BJ (cell line): ENCODE measurements at regions of chr10 and their contacts with region 1.

Region 1: GRCh38 chr10:101441541-101442455 is 87.8 kb downstream of the BTRC start:
- DNase-seq: peak; percentile 8
- H3K4me3 ChIP-seq: no peak overlapping the region
- H3K27me3 ChIP-seq: no peaks in the 10 kb centered on the region
- CTCF ChIP-seq: peak; percentile 66

Region 2: DNA sequence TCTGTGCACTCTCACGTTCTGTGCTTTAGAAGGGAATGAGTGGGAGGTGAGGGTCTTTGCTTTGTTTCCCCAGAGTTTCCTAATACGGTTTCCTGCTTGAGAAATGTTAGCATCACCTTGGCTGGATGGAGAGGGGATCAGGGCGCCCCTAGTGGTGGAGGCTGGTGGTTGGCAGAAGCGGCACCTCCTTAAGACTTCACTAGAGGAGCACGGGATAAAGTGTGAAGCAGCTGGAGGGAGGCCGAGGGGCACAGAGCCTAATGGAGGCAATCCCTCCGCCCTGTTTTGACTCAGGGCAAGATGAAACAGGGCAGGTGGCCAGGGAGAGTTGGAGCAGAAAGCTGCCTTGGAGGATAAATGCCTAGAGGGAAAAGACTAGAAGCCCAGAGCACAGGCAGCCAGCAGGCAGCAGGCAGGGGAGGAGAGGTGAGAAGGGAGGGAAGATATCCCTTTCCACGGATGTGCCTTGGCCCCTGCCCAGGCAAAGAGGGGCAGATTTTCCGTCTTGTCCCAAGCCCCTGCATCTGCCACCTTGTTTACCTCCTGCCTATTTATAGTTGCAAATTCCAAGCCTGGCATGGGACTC is 143.8 kb before region 1 on chr10:
- CTCF ChIA-PET with region 1: interaction called, 14 read pairs
- POLR2A ChIA-PET with region 1: no interaction called
- DNase-seq: no peak
- H3K4me3 ChIP-seq: no peak overlapping the region
- H3K27me3 ChIP-seq: peaks cover 28% of the 10 kb centered on the region
- CTCF ChIP-seq: peak; percentile 93

Region 3: GRCh38 chr10:101341438-101341837 is 100.4 kb before region 1 on chr10:
- CTCF ChIA-PET with region 1: no interaction called
- POLR2A ChIA-PET with region 1: no interaction called
- DNase-seq: no peak
- H3K4me3 ChIP-seq: no peak overlapping the region
- H3K27me3 ChIP-seq: no peaks in the 10 kb centered on the region
- CTCF ChIP-seq: no peak

Region 4: GRCh38 chr10:101425535-101425934 is 16.3 kb before region 1 on chr10:
- CTCF ChIA-PET with region 1: interaction called, 15 read pairs
- POLR2A ChIA-PET with region 1: no interaction called
- DNase-seq: no peak
- H3K4me3 ChIP-seq: no peak overlapping the region
- H3K27me3 ChIP-seq: no peaks in the 10 kb centered on the region
- CTCF ChIP-seq: no peak

Region 5: DNA sequence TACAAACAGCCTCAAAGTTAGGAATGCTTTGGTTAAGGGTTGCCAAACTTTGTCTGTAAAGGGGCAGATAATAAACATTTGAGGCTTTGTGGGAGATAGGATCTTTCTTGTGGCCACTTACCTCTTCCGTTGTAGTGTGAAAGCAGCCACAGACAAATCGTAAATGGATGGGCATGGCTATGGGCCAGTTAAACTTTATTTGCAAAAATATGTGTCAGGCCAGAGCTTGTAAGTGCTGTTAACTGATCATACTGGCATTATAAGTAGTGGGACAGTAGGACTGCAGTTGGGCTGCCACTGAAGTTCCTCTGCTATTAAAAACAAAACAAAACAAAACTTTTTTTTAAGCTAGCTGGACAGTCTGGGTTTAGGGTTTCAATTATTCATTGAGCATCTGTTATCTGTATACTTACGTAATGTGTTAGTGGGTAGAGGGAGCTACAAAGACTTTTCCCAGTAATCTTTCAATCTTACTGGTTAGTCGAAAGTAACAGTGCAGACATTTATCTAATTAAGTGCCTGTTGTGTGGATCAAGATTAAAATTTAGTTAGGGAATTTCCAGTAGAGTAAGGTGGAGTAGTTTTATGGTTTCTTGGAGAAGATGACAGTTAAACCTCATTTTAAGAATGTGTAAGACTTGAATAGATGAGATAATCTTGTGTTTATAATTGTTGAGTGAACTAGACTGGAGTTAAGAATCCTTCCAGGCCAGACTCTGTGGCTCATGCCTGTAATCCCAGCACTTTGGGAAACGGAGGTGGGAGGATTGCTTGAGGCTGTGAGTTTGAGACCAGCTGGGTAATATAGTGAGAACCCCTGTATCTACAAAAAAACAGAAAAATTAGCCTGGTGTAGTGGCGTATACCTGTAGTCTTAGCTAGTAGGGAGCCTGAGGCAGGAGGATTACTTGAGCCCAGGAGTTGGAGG is 12.3 kb after region 1 on chr10:
- CTCF ChIA-PET with region 1: interaction called, 13 read pairs
- POLR2A ChIA-PET with region 1: no interaction called
- DNase-seq: peak; percentile 17
- H3K4me3 ChIP-seq: no peak overlapping the region
- H3K27me3 ChIP-seq: no peaks in the 10 kb centered on the region
- CTCF ChIP-seq: no peak